AG04450 (cell line): ENCODE measurements at regions of chr18 and their contacts with region 1.

Region 1: GRCh38 chr18:75041586-75041985 is 167.4 kb downstream of the PTGR3 start:
- DNase-seq: no peak
- H3K4me3 ChIP-seq: no peak overlapping the region
- H3K27ac ChIP-seq: no peak overlapping the region
- H3K27me3 ChIP-seq: no peaks in the 10 kb centered on the region
- CTCF ChIP-seq: peak; percentile 61

Region 2: GRCh38 chr18:74489676-74490075 is 551.9 kb before region 1 on chr18:
- CTCF ChIA-PET with region 1: no interaction called
- POLR2A ChIA-PET with region 1: no interaction called
- DNase-seq: peak; percentile 18
- H3K4me3 ChIP-seq: peak overlapping the region; percentile 25
- H3K27ac ChIP-seq: no peak overlapping the region
- H3K27me3 ChIP-seq: peaks cover 32% of the 10 kb centered on the region
- CTCF ChIP-seq: no peak

Region 3: DNA sequence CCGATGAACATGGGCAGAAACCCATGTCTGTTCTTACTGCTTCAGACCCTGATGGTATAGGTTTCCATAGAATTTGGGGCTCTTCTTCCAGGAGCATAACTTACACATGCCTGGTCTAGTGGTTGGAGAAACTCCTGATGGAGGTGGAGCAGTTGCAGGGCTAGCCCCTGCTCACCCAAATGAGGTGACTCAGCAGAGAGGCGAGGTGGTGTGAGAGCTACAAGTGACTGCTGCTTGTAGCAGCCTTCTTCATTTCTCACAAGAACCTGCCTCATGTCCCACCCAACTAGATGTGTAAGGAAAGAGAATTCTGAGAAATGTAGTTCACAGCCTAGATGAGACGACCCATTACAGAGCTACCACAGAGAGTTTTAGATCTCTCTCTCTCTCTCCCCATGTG is 338.6 kb before region 1 on chr18:
- CTCF ChIA-PET with region 1: no interaction called
- POLR2A ChIA-PET with region 1: no interaction called
- DNase-seq: no peak
- H3K4me3 ChIP-seq: no peak overlapping the region
- H3K27ac ChIP-seq: no peak overlapping the region
- H3K27me3 ChIP-seq: no peaks in the 10 kb centered on the region
- CTCF ChIP-seq: no peak

Region 4: GRCh38 chr18:75052475-75052874 is 10.9 kb after region 1 on chr18:
- CTCF ChIA-PET with region 1: interaction called, 17 read pairs
- POLR2A ChIA-PET with region 1: no interaction called
- DNase-seq: no peak
- H3K4me3 ChIP-seq: no peak overlapping the region
- H3K27ac ChIP-seq: no peak overlapping the region
- H3K27me3 ChIP-seq: no peaks in the 10 kb centered on the region
- CTCF ChIP-seq: no peak

Region 5: DNA sequence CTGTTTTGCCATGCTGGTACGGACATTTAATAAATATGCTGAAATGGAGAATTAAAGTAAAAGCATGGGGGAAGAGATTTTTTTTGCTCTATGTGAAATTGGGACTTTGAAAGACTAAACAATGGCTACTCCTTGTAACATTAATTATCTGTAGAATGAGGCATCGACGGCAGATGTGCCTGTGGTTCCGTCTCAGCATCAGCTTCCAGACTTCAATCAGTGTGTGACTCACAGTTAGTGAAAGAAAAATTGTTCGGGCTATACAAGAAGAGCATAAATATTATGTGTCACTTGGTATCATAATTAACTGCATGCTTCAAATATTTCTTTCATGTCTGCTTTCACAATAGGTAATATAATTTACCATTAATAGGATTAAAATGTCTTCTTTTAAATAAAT is 502.9 kb after region 1 on chr18:
- CTCF ChIA-PET with region 1: no interaction called
- POLR2A ChIA-PET with region 1: no interaction called
- DNase-seq: no peak
- H3K4me3 ChIP-seq: no peak overlapping the region
- H3K27ac ChIP-seq: no peak overlapping the region
- H3K27me3 ChIP-seq: no peaks in the 10 kb centered on the region
- CTCF ChIP-seq: no peak